Panc1 (cell line): ENCODE measurements at regions of chrX and their contacts with region 1.

Region 1: GRCh38 chrX:22004866-22005265 is 27.3 kb upstream of the PHEX start:
- DNase-seq: no peak
- ATAC-seq: no peak
- H3K4me3 ChIP-seq: no peak overlapping the region
- H3K27ac ChIP-seq: no peak overlapping the region
- H3K4me1 ChIP-seq: no peaks in the 10 kb centered on the region
- H3K27me3 ChIP-seq: no peaks in the 10 kb centered on the region
- CTCF ChIP-seq: no peak

Region 2: DNA sequence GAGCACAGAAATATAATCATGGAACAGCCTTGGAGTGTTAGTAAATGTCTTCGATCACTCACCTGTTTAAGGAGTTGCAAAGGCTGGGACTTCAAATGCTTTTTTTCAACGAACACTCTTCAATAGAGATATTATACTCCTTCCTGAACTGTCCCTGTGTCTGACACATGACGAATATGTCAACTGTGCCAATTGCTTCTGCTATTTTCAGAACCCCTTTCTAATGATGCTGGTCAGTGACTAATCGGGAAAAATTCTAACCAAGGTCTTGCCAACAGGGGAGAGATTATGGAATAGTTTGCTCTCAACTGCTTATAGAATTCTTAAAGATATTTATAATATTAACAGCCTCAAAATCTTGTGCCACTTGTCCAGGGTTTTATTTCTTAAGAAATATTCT is 338.2 kb before region 1 on chrX:
- CTCF ChIA-PET with region 1: no interaction called
- POLR2A ChIA-PET with region 1: interaction called, 15 read pairs
- in situ Hi-C with region 1: no loop called
- intact Hi-C with region 1: no loop called
- DNase-seq: no peak
- ATAC-seq: no peak
- H3K4me3 ChIP-seq: no peak overlapping the region
- H3K27ac ChIP-seq: no peak overlapping the region
- H3K4me1 ChIP-seq: no peaks in the 10 kb centered on the region
- H3K27me3 ChIP-seq: no peaks in the 10 kb centered on the region
- CTCF ChIP-seq: no peak

Region 3: DNA sequence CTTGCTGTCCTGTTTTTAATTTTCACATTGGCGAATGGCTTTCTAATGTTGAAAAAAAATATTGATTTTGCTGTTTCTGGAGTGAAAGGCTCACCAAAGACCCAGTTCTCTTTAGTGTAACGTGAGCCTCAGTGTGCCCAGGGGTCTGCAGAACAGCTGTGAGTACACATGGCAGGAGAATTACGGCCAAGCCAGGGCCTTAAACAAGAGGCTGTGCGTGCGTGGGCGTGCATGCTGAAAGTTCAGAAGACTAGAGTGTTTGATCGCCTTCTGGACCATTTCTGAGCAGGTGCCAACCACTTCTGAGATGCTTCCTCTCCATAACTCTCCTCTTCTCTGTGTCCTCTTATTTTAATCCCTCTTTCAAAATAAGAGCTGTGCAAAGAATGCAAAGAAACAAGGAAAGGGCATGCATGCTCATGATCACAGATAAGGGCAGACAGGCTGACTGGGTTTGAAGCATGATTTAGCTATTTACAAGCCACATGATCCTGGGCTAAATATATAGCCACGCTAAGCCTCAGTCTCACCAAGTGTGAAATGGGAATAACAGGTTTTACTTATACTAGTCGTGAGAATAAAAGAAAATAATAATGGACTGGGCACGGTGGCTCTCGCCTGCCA is 37.2 kb after region 1 on chrX:
- CTCF ChIA-PET with region 1: no interaction called
- POLR2A ChIA-PET with region 1: no interaction called
- in situ Hi-C with region 1: no loop called
- intact Hi-C with region 1: no loop called
- DNase-seq: no peak
- ATAC-seq: no peak
- H3K4me3 ChIP-seq: no peak overlapping the region
- H3K27ac ChIP-seq: no peak overlapping the region
- H3K4me1 ChIP-seq: no peaks in the 10 kb centered on the region
- H3K27me3 ChIP-seq: no peaks in the 10 kb centered on the region
- CTCF ChIP-seq: no peak